Naive thymus-derived CD4-positive, alpha-beta T cell (primary cell): ENCODE measurements at regions of chr10 and their contacts with region 1.

Region 1: GRCh38 chr10:90912174-90912573 is 8.7 kb downstream of the ANKRD1 start:
- DNase-seq: no peak
- ATAC-seq: no peak
- H3K4me3 ChIP-seq: no peak overlapping the region
- H3K4me3 Mint-ChIP-seq: no peak overlapping the region
- H3K27ac ChIP-seq: no peak overlapping the region
- H3K27ac Mint-ChIP-seq: no peak overlapping the region
- H3K4me1 ChIP-seq: peaks cover 0 to 4% of the 10 kb centered on the region in 2 donors
- H3K4me1 Mint-ChIP-seq: peaks cover 0 to 11% (median 4%) of the 10 kb centered on the region in 7 donors
- H3K27me3 ChIP-seq: no peaks in the 10 kb centered on the region
- H3K27me3 Mint-ChIP-seq: peaks cover 0 to 16% (median 4%) of the 10 kb centered on the region in 5 donors

Region 2: DNA sequence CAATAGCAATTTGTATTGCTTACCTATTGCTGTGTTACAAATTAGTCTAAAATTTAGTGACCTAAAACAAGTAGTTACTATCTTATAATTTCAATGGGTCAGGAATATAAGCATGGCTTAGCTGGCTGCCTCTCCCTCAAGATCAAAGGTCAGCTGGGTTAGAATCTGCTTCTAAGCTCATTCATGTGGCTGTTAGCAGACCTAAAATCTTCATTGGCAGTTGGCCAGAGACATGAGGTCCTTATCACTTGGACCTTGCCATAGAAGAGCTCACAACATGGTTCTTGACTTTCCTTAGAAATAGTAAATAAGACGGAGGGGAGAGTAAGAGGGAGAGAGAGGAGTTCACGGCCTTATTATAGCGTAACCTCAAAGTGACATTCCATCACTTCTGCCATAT is 522.3 kb before region 1 on chr10:
- CTCF ChIA-PET with region 1: no interaction called
- POLR2A ChIA-PET with region 1: no interaction called
- intact Hi-C with region 1: no loop called
- DNase-seq: no peak
- ATAC-seq: no peak
- H3K4me3 ChIP-seq: no peak overlapping the region
- H3K4me3 Mint-ChIP-seq: no peak overlapping the region
- H3K27ac ChIP-seq: no peak overlapping the region
- H3K27ac Mint-ChIP-seq: no peak overlapping the region
- H3K4me1 ChIP-seq: no peaks in the 10 kb centered on the region
- H3K4me1 Mint-ChIP-seq: no peaks in the 10 kb centered on the region
- H3K27me3 ChIP-seq: no peaks in the 10 kb centered on the region
- H3K27me3 Mint-ChIP-seq: peaks cover 0 to 8% (median 0%) of the 10 kb centered on the region in 5 donors

Region 3: DNA sequence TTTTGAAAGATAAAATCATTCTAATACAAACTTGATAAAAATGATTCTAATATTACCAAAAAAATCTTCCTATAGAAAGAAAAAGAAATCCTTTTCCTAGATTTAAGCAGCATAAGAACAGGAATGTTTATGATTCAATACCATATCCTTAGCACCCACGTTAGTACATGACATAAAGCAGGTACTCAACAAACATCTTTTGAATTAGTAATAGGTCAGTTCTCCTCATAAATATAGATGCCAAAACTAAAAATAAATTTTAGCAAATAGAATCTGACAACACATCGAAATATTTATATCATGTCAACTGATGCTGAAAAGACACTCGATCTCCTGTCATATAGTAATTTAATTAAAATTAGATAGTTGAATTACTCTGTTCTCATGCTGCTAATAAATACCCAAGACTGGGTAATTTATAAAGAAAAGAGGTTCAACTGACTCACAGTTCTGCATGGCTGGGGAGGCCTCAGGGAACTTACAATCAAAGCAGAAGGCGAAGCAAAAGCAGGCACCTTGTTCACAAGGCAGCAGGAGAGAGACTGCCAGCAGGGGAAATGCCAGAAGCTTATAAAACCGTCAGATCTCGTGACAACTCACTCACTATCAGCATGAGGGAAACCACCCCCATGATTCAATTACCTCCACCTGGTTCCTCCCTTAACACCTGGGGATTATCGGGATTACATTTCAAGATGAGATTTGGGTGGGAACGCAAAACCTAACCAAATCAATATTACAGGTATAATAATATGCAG is 246.1 kb before region 1 on chr10:
- CTCF ChIA-PET with region 1: no interaction called
- POLR2A ChIA-PET with region 1: no interaction called
- intact Hi-C with region 1: no loop called
- DNase-seq: no peak
- ATAC-seq: no peak
- H3K4me3 ChIP-seq: no peak overlapping the region
- H3K4me3 Mint-ChIP-seq: no peak overlapping the region
- H3K27ac ChIP-seq: no peak overlapping the region
- H3K27ac Mint-ChIP-seq: no peak overlapping the region
- H3K4me1 ChIP-seq: no peaks in the 10 kb centered on the region
- H3K4me1 Mint-ChIP-seq: no peaks in the 10 kb centered on the region
- H3K27me3 ChIP-seq: no peaks in the 10 kb centered on the region
- H3K27me3 Mint-ChIP-seq: peaks cover 0 to 12% (median 9%) of the 10 kb centered on the region in 5 donors

Region 4: DNA sequence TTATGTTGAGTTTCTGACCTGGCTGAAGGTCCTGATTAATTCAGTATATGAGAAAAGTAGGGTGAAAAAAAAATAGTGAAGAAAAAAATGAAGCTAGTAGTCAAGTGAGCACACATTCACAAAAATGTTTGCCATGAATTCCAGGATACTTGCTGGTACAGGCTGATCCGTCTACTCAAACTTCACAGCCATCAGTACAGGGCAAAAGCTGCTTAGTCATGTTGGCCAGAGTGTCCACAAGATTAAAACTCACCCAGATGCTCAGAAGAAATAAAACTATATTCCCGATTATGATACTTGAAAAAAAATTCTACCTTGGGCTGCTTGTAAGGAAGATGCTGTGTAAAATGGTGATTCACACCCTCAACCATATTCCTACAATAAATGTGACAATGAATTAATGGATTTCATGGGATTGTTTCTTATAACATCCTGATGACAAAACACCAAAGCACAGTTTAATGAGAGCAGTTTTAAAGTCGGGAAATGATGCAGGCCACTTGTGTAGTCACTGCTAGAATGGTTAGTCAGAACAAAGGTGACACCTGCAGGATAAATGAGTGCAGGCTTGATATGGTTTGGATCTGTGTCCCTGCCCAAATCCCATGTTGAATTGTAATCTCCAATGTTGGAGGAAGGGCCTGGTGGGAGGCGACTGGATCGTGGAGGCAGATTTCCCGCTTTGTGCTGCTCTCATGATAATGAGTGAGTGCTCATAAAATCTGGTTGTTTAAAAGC is 57.9 kb after region 1 on chr10:
- CTCF ChIA-PET with region 1: no interaction called
- POLR2A ChIA-PET with region 1: no interaction called
- intact Hi-C with region 1: loop called in 1 of 2 experiments (anchors 1 kb)
- DNase-seq: no peak
- ATAC-seq: no peak
- H3K4me3 ChIP-seq: no peak overlapping the region
- H3K4me3 Mint-ChIP-seq: no peak overlapping the region
- H3K27ac ChIP-seq: no peak overlapping the region
- H3K27ac Mint-ChIP-seq: no peak overlapping the region
- H3K4me1 ChIP-seq: no peaks in the 10 kb centered on the region
- H3K4me1 Mint-ChIP-seq: no peaks in the 10 kb centered on the region
- H3K27me3 ChIP-seq: no peaks in the 10 kb centered on the region
- H3K27me3 Mint-ChIP-seq: peaks cover 10 to 22% (median 10%) of the 10 kb centered on the region in 5 donors

Region 5: GRCh38 chr10:91088300-91089140 is 176.3 kb after region 1 on chr10:
- CTCF ChIA-PET with region 1: no interaction called
- POLR2A ChIA-PET with region 1: no interaction called
- intact Hi-C with region 1: loop called (anchors 2 to 10 kb)
- DNase-seq: peak in 6 of 9 donors; percentile 10 to 37 (median 26)
- ATAC-seq: peak; percentile 64
- H3K4me3 ChIP-seq: no peak overlapping the region
- H3K4me3 Mint-ChIP-seq: no peak overlapping the region
- H3K27ac ChIP-seq: no peak overlapping the region
- H3K27ac Mint-ChIP-seq: peak overlapping the region in 2 of 9 donors; percentile 15 to 42
- H3K4me1 ChIP-seq: no peaks in the 10 kb centered on the region
- H3K4me1 Mint-ChIP-seq: peaks cover 0 to 2% (median 0%) of the 10 kb centered on the region in 7 donors
- H3K27me3 ChIP-seq: no peaks in the 10 kb centered on the region
- H3K27me3 Mint-ChIP-seq: peaks cover 0 to 11% (median 0%) of the 10 kb centered on the region in 5 donors

Region 6: GRCh38 chr10:91391920-91392319 is 479.7 kb after region 1 on chr10:
- CTCF ChIA-PET with region 1: no interaction called
- POLR2A ChIA-PET with region 1: no interaction called
- intact Hi-C with region 1: no loop called
- DNase-seq: no peak
- ATAC-seq: no peak
- H3K4me3 ChIP-seq: no peak overlapping the region
- H3K4me3 Mint-ChIP-seq: no peak overlapping the region
- H3K27ac ChIP-seq: no peak overlapping the region
- H3K27ac Mint-ChIP-seq: no peak overlapping the region
- H3K4me1 ChIP-seq: no peaks in the 10 kb centered on the region
- H3K4me1 Mint-ChIP-seq: peaks cover 0 to 11% (median 6%) of the 10 kb centered on the region in 7 donors
- H3K27me3 ChIP-seq: no peaks in the 10 kb centered on the region
- H3K27me3 Mint-ChIP-seq: peaks cover 13 to 31% (median 23%) of the 10 kb centered on the region in 5 donors